Body of pancreas (tissue), 4 donors: ENCODE measurements at regions of chr6 and their contacts with region 1.

Region 1: DNA sequence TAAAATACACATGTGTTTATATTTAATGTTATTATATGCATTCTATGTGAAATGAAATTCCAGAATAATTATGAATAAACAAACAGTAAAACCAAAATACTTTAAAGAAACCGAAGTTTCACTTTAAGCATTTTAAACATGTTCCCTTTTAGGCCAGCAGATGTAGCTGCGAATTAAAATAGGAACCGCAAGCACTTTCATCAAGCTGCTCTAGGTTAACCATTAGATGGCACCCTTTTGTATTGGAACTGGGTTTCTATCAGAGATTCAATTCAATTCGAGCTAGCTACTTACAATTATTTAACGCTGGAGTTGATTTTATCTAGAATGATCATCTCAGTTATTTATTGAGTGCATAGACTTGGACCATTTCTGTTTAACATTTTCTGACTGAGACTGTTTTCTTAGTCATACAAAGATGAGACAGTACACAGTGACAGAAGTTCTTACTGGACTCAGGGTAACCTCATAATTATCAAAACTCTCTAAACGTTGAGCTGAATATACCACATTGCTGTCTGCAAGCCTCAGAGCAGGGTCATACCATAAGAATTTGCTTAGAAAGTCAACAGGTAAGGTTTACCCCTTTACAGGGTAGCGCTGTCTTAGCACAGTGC is 8.5 kb downstream of the TMEM242 start:
- DNase-seq: peak in 2 of 4 donors; percentile 29 to 57
- ATAC-seq: peak; percentile 79
- H3K4me3 ChIP-seq: no peak overlapping the region
- H3K27ac ChIP-seq: no peak overlapping the region
- H3K4me1 ChIP-seq: peaks cover 16% of the 10 kb centered on the region
- H3K27me3 ChIP-seq: no peaks in the 10 kb centered on the region
- CTCF ChIP-seq: peak; percentile 45 to 96 (median 90)
- POLR2A ChIP-seq: no peak

Region 2: GRCh38 chr6:157434349-157435033 is 119.7 kb after region 1 on chr6:
- intact Hi-C with region 1: no loop called
- DNase-seq: peak; percentile 37 to 70 (median 55)
- ATAC-seq: peak; percentile 71
- H3K4me3 ChIP-seq: no peak overlapping the region
- H3K27ac ChIP-seq: peak overlapping the region in 2 of 4 donors; percentile 52 to 67
- H3K4me1 ChIP-seq: peaks cover 23% of the 10 kb centered on the region
- H3K27me3 ChIP-seq: no peaks in the 10 kb centered on the region
- CTCF ChIP-seq: no peak
- POLR2A ChIP-seq: no peak

Region 3: DNA sequence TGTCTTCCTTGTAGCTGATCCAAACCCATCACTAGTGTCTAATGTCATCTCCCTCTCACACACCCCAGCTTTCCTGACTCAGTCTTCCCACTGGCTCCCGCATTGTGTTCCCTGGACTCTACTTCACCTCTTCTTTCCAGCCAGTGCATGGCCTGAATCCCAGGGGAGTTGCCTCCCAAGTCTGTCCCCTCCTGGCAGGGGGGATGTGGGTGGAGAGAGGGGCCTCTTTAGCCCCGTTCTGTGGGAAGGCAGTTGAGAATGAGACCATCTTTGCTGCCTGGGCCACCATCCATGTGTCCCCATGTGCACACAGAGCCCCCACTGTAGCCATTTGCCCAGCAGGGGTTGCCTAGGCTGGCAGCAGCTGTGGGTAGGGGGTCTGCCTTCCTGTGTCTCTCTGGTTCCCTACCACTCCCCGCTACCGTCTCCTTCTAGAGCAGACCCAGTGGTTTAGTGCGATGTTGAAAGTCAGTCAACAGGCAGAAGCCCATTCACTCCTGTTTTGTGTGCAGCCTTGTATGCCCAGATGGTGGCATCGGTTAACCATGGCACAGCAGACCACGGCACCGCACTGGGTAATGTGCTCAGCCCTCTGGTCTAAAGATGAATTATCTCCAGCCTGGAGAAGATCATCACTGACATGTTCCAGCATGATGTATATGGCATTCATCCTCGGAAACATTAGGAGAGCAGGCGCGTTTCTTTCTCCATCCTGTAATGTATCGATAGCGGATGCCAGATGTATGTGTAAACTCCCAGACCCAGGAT is 329.4 kb after region 1 on chr6:
- intact Hi-C with region 1: no loop called
- DNase-seq: no peak
- ATAC-seq: no peak
- H3K4me3 ChIP-seq: no peak overlapping the region
- H3K27ac ChIP-seq: no peak overlapping the region
- H3K4me1 ChIP-seq: no peaks in the 10 kb centered on the region
- H3K27me3 ChIP-seq: no peaks in the 10 kb centered on the region
- CTCF ChIP-seq: no peak
- POLR2A ChIP-seq: no peak

Region 4: DNA sequence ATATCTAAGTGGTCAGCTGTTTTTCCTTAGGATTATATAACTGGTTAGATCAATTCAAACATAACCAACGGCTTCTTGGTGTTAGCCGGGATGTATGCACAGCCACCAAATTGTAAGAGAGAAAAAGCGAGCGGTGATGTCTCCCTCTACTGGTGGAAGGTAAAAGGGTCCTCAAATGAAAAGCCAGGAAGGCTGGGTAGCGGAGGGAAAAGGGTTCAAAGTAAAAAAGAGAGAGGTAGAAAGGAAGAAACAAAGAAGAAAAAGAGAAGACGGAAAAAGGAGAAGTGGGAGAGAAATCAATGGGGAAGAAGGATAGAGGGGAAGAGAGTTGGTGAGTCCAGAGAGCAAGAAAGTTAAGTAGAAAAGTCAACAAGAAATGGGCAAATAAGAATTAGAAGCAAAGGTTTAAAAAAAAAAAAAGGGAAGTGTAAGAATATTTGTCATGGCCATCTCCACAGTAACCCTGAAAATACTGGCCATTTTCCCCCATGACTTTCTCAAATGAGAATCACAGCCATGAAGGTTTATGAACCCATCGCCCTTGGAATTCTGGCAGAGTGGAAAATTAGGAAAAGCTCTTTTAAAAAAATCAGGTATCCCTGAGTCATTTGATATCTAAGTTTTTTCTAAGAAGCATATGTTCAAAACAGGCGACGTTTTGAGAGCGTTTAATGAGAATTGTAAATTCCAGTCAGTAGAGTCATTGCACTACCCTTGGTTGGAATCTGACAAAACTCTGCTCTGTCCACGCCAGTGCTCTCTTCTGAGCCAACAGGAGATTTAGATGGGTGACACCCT is 352.6 kb after region 1 on chr6:
- intact Hi-C with region 1: loop called (anchors 5 kb)
- DNase-seq: peak; percentile 51 to 64 (median 58)
- ATAC-seq: peak; percentile 72
- H3K4me3 ChIP-seq: no peak overlapping the region
- H3K27ac ChIP-seq: no peak overlapping the region
- H3K4me1 ChIP-seq: no peaks in the 10 kb centered on the region
- H3K27me3 ChIP-seq: no peaks in the 10 kb centered on the region
- CTCF ChIP-seq: peak; percentile 72 to 95 (median 84)
- POLR2A ChIP-seq: no peak

Region 5: DNA sequence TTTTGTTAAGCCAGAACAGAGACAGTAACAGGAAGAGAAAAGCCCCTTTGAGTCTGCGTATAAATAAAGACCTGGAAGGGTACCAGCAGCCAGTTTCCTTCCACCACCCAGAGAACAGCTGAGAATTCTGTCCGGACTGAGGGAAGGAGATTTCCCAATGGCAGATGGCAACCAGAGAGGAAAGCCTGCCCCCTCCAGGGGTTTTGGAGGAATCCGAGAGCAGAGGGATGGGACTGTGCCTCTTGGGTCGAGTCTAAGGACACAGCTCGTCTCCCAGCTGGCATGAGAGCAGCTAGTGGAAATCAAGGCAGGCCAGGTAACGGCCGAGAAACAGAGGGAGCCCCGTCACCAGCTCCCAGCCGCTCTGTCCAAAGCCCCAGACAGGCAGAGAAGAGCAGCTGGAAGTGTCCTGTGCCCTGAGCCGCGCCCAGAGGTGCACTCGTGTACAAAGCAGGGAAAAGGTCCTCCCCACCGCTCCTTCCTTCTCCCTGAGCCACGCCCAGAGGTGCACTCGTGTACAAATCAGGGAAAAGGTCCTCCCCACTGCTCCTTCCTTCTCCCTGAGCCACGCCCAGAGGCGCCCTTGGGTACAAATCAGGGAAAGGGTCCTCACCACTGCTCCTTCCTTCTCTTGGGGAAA is 374.3 kb after region 1 on chr6:
- intact Hi-C with region 1: no loop called
- DNase-seq: no peak
- ATAC-seq: no peak
- H3K4me3 ChIP-seq: no peak overlapping the region
- H3K27ac ChIP-seq: no peak overlapping the region
- H3K4me1 ChIP-seq: no peaks in the 10 kb centered on the region
- H3K27me3 ChIP-seq: no peaks in the 10 kb centered on the region
- CTCF ChIP-seq: no peak
- POLR2A ChIP-seq: no peak